ENCODE measurements at regions of chr4 and their contacts with region 1.

Region 1: GRCh38 chr4:151553854-151554253 is 144.9 kb downstream of the FHIP1A start:
- DNase-seq: no peak
- H3K4me3 ChIP-seq: no peak overlapping the region
- H3K27ac ChIP-seq: no peak overlapping the region
- H3K4me1 ChIP-seq: no peaks in the 10 kb centered on the region
- H3K27me3 ChIP-seq: no peaks in the 10 kb centered on the region
- CTCF ChIP-seq: no peak
- EP300 ChIP-seq: no peak
- POLR2A ChIP-seq: no peak

Region 2: GRCh38 chr4:150828159-150828558 is 725.7 kb before region 1 on chr4:
- intact Hi-C with region 1: loop called in 1 of 4 experiments (anchors 5 kb)
- DNase-seq: no peak
- H3K4me3 ChIP-seq: no peak overlapping the region
- H3K27ac ChIP-seq: no peak overlapping the region
- H3K4me1 ChIP-seq: no peaks in the 10 kb centered on the region
- H3K27me3 ChIP-seq: no peaks in the 10 kb centered on the region
- CTCF ChIP-seq: no peak
- EP300 ChIP-seq: no peak
- POLR2A ChIP-seq: no peak

Region 3: GRCh38 chr4:151744614-151745013 is 190.8 kb after region 1 on chr4:
- intact Hi-C with region 1: no loop called
- DNase-seq: no peak
- H3K4me3 ChIP-seq: no peak overlapping the region
- H3K27ac ChIP-seq: no peak overlapping the region
- H3K4me1 ChIP-seq: no peaks in the 10 kb centered on the region
- H3K27me3 ChIP-seq: no peaks in the 10 kb centered on the region
- CTCF ChIP-seq: no peak
- EP300 ChIP-seq: no peak
- POLR2A ChIP-seq: no peak